Spleen (tissue), 13 donors: ENCODE measurements at regions of chr6 and their contacts with region 1.

Region 1: GRCh38 chr6:161101517-161101916 is 109.9 kb downstream of the MAP3K4 start:
- DNase-seq: no peak
- H3K4me3 ChIP-seq: no peak overlapping the region
- H3K27ac ChIP-seq: no peak overlapping the region
- H3K4me1 ChIP-seq: no peaks in the 10 kb centered on the region
- H3K27me3 ChIP-seq: no peaks in the 10 kb centered on the region
- CTCF ChIP-seq: peak in 1 of 11 experiments; percentile 17
- POLR2A ChIP-seq: no peak

Region 2: DNA sequence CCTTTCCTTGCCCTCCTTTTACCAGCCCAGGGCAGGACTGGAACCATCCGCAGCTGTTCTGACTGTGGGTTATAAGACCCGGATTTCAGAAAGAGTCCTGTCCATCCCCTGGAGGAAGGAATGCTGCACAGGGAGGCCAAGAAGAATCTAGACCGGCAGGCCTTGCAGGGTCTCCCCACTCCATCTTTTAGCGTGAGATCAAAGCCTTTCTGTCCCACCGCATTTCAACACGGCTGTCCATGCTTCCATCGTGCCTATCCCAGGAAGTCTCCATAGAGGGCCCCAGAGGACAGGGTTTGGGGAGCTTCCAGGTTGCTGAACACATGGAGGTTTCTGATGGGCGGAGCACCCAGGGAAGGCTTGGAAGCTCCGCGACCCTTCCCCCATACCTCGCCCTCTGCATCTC is 251.7 kb after region 1 on chr6:
- intact Hi-C with region 1: loop called (anchors 10 kb)
- DNase-seq: no peak
- H3K4me3 ChIP-seq: no peak overlapping the region
- H3K27ac ChIP-seq: no peak overlapping the region
- H3K4me1 ChIP-seq: peaks cover 0 to 14% (median 0%) of the 10 kb centered on the region in 6 donors
- H3K27me3 ChIP-seq: no peaks in the 10 kb centered on the region
- CTCF ChIP-seq: no peak
- POLR2A ChIP-seq: no peak